Naive thymus-derived CD4-positive, alpha-beta T cell (primary cell): ENCODE measurements at regions of chr10 and their contacts with region 1.

Region 1: GRCh38 chr10:29735596-29736318 is 101.0 kb upstream of the SVIL start:
- DNase-seq: peak; percentile 58 to 90 (median 74)
- ATAC-seq: peak; percentile 88
- H3K4me3 ChIP-seq: peak overlapping the region; percentile 71
- H3K4me3 Mint-ChIP-seq: peak overlapping the region; percentile 74 to 97 (median 85)
- H3K27ac ChIP-seq: peak overlapping the region; percentile 71
- H3K27ac Mint-ChIP-seq: peak overlapping the region in 5 of 9 donors; percentile 32 to 82 (median 80)
- H3K4me1 ChIP-seq: peaks cover 3 to 23% of the 10 kb centered on the region in 2 donors
- H3K4me1 Mint-ChIP-seq: peaks cover 23 to 50% (median 40%) of the 10 kb centered on the region in 7 donors
- H3K27me3 ChIP-seq: no peaks in the 10 kb centered on the region
- H3K27me3 Mint-ChIP-seq: peaks cover 0 to 44% (median 0%) of the 10 kb centered on the region in 5 donors

Region 2: DNA sequence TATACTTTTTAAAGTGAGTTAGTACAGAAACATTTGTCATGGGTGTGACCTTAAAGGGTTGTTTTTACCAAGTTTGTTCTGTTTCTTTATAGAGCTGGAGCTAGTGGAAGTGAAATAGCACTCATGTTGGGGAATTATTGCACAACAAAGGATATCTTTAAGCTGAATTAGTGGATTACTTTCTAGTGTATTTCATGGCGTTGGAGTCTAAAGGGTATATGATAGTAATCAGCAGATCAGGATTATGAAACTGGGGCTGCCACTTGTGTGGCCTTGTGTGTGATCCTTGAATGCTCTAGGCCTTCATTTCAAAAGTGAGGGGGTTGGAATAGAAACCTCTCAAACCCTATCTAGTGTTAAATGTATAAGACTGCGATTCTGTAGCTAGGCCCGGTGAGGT is 323.3 kb before region 1 on chr10:
- CTCF ChIA-PET with region 1: no interaction called
- POLR2A ChIA-PET with region 1: no interaction called
- intact Hi-C with region 1: no loop called
- DNase-seq: no peak
- ATAC-seq: no peak
- H3K4me3 ChIP-seq: no peak overlapping the region
- H3K4me3 Mint-ChIP-seq: peak overlapping the region in 1 of 10 donors; percentile 30
- H3K27ac ChIP-seq: no peak overlapping the region
- H3K27ac Mint-ChIP-seq: peak overlapping the region in 1 of 9 donors; percentile 3
- H3K4me1 ChIP-seq: peaks cover 0 to 9% of the 10 kb centered on the region in 2 donors
- H3K4me1 Mint-ChIP-seq: peaks cover 17 to 53% (median 37%) of the 10 kb centered on the region in 7 donors
- H3K27me3 ChIP-seq: no peaks in the 10 kb centered on the region
- H3K27me3 Mint-ChIP-seq: no peaks in the 10 kb centered on the region

Region 3: DNA sequence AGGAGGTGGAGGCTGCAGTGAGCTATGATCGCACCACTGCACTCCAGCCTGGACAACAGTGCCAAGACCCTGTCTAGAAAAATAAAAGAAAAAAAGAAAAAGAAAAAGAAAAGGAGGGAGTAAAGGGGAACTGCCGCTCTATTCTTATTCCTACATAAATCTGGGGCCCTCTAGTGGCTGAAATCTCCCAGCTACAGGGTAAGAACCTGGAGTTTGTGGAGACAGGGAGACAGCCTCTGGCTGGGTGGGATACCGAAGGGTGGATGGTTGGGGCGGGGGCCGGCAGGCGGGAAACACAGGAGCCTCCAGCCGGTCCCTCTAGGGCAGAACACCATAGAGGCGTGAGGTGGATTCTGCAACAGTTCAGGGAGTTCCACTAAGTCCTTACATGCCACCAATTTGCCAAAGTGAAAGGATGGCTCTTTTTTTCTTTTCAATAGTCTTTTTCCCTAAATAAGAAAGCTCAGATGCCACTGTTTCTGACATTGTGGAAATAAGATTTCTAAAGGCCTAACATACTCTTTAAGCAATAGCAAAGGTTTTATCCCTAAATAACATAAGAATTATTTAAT is 218.3 kb before region 1 on chr10:
- CTCF ChIA-PET with region 1: no interaction called
- POLR2A ChIA-PET with region 1: no interaction called
- intact Hi-C with region 1: loop called in 1 of 2 experiments (anchors 5 kb)
- DNase-seq: no peak
- ATAC-seq: no peak
- H3K4me3 ChIP-seq: no peak overlapping the region
- H3K4me3 Mint-ChIP-seq: no peak overlapping the region
- H3K27ac ChIP-seq: no peak overlapping the region
- H3K27ac Mint-ChIP-seq: peak overlapping the region in 1 of 9 donors; percentile 17
- H3K4me1 ChIP-seq: no peaks in the 10 kb centered on the region
- H3K4me1 Mint-ChIP-seq: peaks cover 0 to 2% (median 0%) of the 10 kb centered on the region in 7 donors
- H3K27me3 ChIP-seq: no peaks in the 10 kb centered on the region
- H3K27me3 Mint-ChIP-seq: no peaks in the 10 kb centered on the region

Region 4: DNA sequence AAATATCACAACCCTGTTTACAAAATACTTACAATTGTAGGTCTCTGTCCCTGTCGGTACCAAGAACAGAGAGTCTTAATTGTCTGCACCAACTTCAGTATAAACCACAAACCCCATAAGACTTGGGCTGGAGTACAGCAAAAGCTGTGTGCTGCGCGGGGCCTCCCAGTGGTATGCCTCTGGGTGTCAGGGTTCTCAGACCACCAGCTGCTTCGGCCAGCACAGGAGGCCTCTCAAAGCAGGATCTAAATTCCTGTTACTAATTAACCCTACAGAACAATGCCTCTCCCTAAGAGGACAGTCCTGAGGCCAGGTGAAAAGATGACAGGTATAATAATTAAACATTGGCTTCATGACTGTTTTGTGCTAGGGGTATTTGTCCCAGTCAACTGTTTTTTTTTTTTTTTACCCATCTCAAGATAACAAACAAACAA is 100.0 kb before region 1 on chr10:
- CTCF ChIA-PET with region 1: interaction called, 3 read pairs
- POLR2A ChIA-PET with region 1: no interaction called
- intact Hi-C with region 1: loop called in 1 of 2 experiments (anchors 1 kb)
- DNase-seq: peak in 2 of 9 donors; percentile 5 to 13
- ATAC-seq: peak; percentile 56
- H3K4me3 ChIP-seq: no peak overlapping the region
- H3K4me3 Mint-ChIP-seq: peak overlapping the region in 8 of 10 donors; percentile 34 to 67 (median 51)
- H3K27ac ChIP-seq: no peak overlapping the region
- H3K27ac Mint-ChIP-seq: peak overlapping the region in 7 of 9 donors; percentile 21 to 80 (median 32)
- H3K4me1 ChIP-seq: peaks cover 14 to 16% of the 10 kb centered on the region in 2 donors
- H3K4me1 Mint-ChIP-seq: peaks cover 25 to 60% (median 48%) of the 10 kb centered on the region in 7 donors
- H3K27me3 ChIP-seq: no peaks in the 10 kb centered on the region
- H3K27me3 Mint-ChIP-seq: no peaks in the 10 kb centered on the region

Region 5: DNA sequence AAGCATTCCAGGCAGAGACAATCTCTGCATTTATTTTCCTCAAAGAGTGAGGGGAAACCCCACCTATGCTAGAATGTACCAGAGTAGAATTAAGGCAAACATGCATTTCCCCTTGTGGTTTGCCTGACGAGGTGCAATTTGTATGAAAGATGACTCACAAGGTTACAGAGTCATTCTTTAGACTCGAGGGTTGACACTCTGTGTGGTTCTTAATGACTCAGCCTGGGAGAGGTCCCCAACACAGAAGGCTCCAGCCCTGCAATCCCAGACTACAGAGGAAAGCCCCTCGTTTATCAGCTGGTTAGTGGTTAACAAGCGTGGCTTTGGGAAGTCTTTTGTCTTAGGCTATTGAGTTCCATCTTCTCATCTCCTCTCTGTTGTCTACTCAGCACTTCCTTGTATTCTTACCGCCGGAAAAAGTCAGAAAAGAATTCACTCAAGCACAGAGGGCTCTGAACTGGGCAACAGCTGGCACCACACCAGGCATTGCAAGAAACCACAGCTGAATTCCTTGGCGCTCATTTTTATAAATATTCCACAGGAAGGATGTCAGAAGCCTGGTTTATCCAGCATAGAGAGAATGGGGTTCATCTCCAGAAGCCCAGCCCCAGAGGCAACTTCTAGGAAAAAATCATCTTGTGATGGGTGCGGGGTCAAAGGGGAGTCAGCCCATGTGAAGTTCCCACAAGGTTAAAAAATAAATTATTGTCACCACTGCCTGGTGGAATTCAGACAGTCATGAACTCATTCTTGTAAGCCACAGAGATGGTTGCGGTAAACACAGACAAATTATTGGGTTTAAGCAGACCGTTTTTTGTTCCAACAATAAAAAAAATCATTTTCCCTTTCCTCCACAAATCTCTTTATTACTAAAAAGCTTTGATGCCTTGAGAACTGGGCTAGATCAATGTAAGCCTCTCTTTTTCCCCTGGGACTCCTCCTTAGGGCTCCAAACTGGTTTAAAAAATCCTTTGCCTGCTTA is 76.5 kb before region 1 on chr10:
- CTCF ChIA-PET with region 1: interaction called, 7 read pairs
- POLR2A ChIA-PET with region 1: interaction called, 10 read pairs
- intact Hi-C with region 1: loop called (anchors 1 to 2 kb)
- DNase-seq: peak in 8 of 9 donors; percentile 34 to 82 (median 48)
- ATAC-seq: peak; percentile 97
- H3K4me3 ChIP-seq: peak overlapping the region; percentile 12
- H3K4me3 Mint-ChIP-seq: peak overlapping the region; percentile 39 to 81 (median 64)
- H3K27ac ChIP-seq: peak overlapping the region; percentile 2
- H3K27ac Mint-ChIP-seq: peak overlapping the region; percentile 3 to 84 (median 58)
- H3K4me1 ChIP-seq: peaks cover 14 to 30% of the 10 kb centered on the region in 2 donors
- H3K4me1 Mint-ChIP-seq: peaks cover 21 to 51% (median 29%) of the 10 kb centered on the region in 7 donors
- H3K27me3 ChIP-seq: no peaks in the 10 kb centered on the region
- H3K27me3 Mint-ChIP-seq: peaks cover 0 to 49% (median 0%) of the 10 kb centered on the region in 5 donors

Region 6: DNA sequence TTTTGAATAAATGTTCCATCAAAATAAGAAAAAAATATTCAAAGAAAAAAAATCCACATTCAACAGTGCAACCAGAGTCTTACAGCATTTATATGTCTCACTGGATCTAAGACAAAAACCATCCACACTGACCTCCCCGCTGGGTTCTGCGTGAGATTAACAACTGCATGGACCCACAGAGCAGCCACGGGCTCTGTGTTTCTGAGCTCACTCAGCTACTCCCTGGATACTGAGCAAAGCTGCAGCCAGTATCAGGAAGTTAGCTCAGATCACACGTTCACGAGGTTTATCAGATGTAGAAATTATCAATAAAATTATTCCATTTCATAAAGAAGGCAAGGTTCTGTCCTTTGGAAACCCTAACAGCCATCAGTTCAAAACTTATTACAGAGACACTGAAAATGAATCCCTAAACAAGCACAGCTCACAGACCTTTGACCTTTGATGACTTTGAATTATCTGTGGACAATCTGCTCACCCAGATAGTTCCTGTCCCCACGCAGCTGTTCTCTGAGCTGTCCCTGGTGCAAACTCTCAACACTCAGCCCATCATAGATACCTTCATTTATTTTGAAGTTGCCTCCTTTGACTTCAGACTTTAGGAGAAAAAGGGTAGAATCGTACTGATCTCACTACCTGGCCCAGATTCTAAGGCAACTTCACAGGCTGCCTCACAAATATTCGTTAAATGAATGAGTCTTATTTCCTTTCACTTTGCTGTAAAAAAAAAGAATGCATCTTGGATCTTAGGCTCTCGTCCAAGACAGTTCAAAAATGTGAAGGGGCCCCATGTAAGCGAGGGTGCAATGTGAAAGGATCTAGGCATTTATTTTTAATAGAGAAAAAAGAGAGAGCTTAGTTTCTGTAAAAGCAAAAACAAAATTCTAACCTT is 33.2 kb before region 1 on chr10:
- CTCF ChIA-PET with region 1: interaction called, 8 read pairs
- POLR2A ChIA-PET with region 1: no interaction called
- intact Hi-C with region 1: loop called in 1 of 2 experiments (anchors 5 kb)
- DNase-seq: peak in 4 of 9 donors; percentile 12 to 32 (median 18)
- ATAC-seq: peak; percentile 66
- H3K4me3 ChIP-seq: peak overlapping the region; percentile 37
- H3K4me3 Mint-ChIP-seq: peak overlapping the region; percentile 66 to 90 (median 79)
- H3K27ac ChIP-seq: peak overlapping the region; percentile 68
- H3K27ac Mint-ChIP-seq: peak overlapping the region; percentile 72 to 92 (median 89)
- H3K4me1 ChIP-seq: peaks cover 7 to 27% of the 10 kb centered on the region in 2 donors
- H3K4me1 Mint-ChIP-seq: peaks cover 22 to 81% (median 60%) of the 10 kb centered on the region in 7 donors
- H3K27me3 ChIP-seq: no peaks in the 10 kb centered on the region
- H3K27me3 Mint-ChIP-seq: no peaks in the 10 kb centered on the region

Region 7: DNA sequence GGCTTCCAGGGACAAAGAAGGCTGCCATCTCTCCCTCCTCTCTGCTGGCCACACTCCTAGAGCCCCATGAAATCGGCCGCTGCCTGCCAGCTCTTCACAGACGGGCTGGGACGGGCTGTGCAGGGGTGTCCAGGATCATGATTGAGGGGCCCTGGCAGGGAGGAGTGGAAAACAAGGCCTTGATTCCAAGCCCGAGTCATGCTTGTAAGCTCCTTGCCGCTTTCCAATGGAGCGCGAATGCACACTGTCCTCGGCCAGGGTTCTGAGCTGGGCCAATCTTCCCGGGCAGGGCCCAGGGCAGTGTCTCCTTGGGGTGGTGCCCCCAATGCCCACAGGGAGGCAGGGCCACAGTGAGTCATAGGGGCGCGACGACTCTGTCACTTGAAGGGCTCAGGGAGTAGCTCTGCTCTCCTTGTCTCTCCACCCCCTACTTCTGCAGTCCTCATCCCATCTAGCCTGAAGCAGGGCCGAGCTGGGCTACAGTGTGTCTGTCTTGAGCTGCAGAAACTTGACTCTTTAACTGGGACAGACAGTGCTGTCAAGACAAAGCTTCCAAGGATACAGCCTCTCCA is 85.2 kb after region 1 on chr10:
- CTCF ChIA-PET with region 1: no interaction called
- POLR2A ChIA-PET with region 1: no interaction called
- intact Hi-C with region 1: no loop called
- DNase-seq: no peak
- ATAC-seq: no peak
- H3K4me3 ChIP-seq: no peak overlapping the region
- H3K4me3 Mint-ChIP-seq: no peak overlapping the region
- H3K27ac ChIP-seq: no peak overlapping the region
- H3K27ac Mint-ChIP-seq: no peak overlapping the region
- H3K4me1 ChIP-seq: no peaks in the 10 kb centered on the region
- H3K4me1 Mint-ChIP-seq: no peaks in the 10 kb centered on the region
- H3K27me3 ChIP-seq: no peaks in the 10 kb centered on the region
- H3K27me3 Mint-ChIP-seq: peaks cover 0 to 26% (median 10%) of the 10 kb centered on the region in 5 donors